CD8-positive, alpha-beta T cell (primary cell): ENCODE measurements at regions of chr12 and their contacts with region 1.

Region 1: GRCh38 chr12:101759396-101760047 is 20.3 kb upstream of the SYCP3 start:
- DNase-seq: peak in 2 of 9 experiments; percentile 44 to 57
- ATAC-seq: peak; percentile 62
- H3K4me3 ChIP-seq: no peak overlapping the region
- H3K4me3 Mint-ChIP-seq: no peak overlapping the region
- H3K27ac ChIP-seq: no peak overlapping the region
- H3K27ac Mint-ChIP-seq: no peak overlapping the region
- H3K4me1 ChIP-seq: no peaks in the 10 kb centered on the region
- H3K4me1 Mint-ChIP-seq: peaks cover 2% of the 10 kb centered on the region
- H3K27me3 ChIP-seq: no peaks in the 10 kb centered on the region
- H3K27me3 Mint-ChIP-seq: no peaks in the 10 kb centered on the region
- CTCF ChIP-seq: peak; percentile 94

Region 2: DNA sequence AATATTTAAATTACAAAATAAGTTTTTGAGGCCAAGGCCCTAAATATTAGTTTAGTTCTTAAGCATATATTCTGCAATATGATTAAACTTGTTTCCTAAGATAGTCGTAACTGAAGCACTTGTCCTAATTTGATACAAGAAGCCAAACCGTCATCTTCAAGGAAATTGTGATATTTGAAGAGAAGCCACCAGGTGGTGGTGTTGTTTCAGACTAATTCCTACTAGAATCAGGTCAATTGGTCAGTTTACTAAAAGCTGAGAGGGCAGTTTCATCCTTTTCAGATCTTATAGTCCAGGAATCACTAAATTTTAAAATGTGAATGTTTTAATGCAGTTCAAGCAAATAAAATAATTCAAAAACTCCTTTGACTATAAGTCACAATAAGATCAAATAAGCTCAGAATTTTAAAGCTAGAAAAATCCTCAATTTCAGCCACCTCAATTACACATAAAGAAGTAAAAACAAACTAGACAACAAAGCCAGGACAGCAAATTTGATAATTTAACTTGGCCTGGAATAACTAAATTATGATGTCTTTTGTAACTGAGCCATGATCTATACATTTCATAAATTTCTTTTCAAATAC is 344.9 kb before region 1 on chr12:
- CTCF ChIA-PET with region 1: interaction called, 7 read pairs
- POLR2A ChIA-PET with region 1: no interaction called
- intact Hi-C with region 1: loop called (anchors 1 to 5 kb)
- DNase-seq: peak in 2 of 9 experiments; percentile 46 to 52
- ATAC-seq: no peak
- H3K4me3 ChIP-seq: no peak overlapping the region
- H3K4me3 Mint-ChIP-seq: no peak overlapping the region
- H3K27ac ChIP-seq: no peak overlapping the region
- H3K27ac Mint-ChIP-seq: no peak overlapping the region
- H3K4me1 ChIP-seq: no peaks in the 10 kb centered on the region
- H3K4me1 Mint-ChIP-seq: no peaks in the 10 kb centered on the region
- H3K27me3 ChIP-seq: no peaks in the 10 kb centered on the region
- H3K27me3 Mint-ChIP-seq: peaks cover 5% of the 10 kb centered on the region
- CTCF ChIP-seq: peak; percentile 64

Region 3: GRCh38 chr12:101570047-101570446 is 189.5 kb before region 1 on chr12:
- CTCF ChIA-PET with region 1: interaction called, 3 read pairs
- POLR2A ChIA-PET with region 1: no interaction called
- intact Hi-C with region 1: loop called (anchors 2 to 10 kb)
- DNase-seq: peak in 2 of 9 experiments; percentile 1 to 8
- ATAC-seq: no peak
- H3K4me3 ChIP-seq: no peak overlapping the region
- H3K4me3 Mint-ChIP-seq: no peak overlapping the region
- H3K27ac ChIP-seq: no peak overlapping the region
- H3K27ac Mint-ChIP-seq: no peak overlapping the region
- H3K4me1 ChIP-seq: no peaks in the 10 kb centered on the region
- H3K4me1 Mint-ChIP-seq: no peaks in the 10 kb centered on the region
- H3K27me3 ChIP-seq: no peaks in the 10 kb centered on the region
- H3K27me3 Mint-ChIP-seq: peaks cover 11% of the 10 kb centered on the region
- CTCF ChIP-seq: no peak

Region 4: DNA sequence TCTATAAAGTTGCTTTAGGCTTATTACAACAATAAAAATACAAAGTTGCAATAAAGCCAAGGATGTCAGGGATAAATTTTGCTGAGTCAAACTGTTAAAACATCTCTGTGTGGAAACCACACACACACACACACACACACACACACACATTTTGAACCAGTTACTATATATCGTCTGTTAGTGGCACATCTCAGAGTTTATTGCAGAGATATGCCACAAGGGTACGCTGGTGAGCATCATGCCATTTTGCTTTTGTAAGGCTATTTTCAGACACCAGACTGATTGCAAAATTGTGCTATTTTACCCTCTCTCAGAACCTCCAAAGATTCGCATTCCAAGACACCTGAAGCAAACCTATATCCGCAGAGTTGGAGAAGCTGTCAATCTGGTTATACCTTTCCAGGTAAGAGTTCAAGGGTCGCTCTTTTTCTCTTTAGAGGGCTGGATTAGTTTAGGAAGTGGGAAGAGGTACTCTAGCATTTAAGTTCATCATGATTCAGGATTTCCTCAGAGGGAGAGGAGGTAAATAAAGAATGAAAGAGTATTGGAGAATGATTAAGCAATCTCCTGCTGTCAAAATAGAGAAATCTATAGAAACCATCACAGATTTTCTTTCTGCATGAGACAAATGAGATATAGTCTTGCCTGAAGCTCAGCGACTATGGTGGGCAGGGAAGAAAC is 89.4 kb before region 1 on chr12:
- CTCF ChIA-PET with region 1: interaction called, 4 read pairs
- POLR2A ChIA-PET with region 1: no interaction called
- intact Hi-C with region 1: loop called (anchors 1 to 5 kb)
- DNase-seq: peak in 6 of 9 experiments; percentile 6 to 78 (median 40)
- ATAC-seq: peak; percentile 72
- H3K4me3 ChIP-seq: no peak overlapping the region
- H3K4me3 Mint-ChIP-seq: no peak overlapping the region
- H3K27ac ChIP-seq: no peak overlapping the region
- H3K27ac Mint-ChIP-seq: peak overlapping the region; percentile 20
- H3K4me1 ChIP-seq: peaks cover 17% of the 10 kb centered on the region
- H3K4me1 Mint-ChIP-seq: peaks cover 24% of the 10 kb centered on the region
- H3K27me3 ChIP-seq: no peaks in the 10 kb centered on the region
- H3K27me3 Mint-ChIP-seq: peaks cover 2% of the 10 kb centered on the region
- CTCF ChIP-seq: peak; percentile 45

Region 5: DNA sequence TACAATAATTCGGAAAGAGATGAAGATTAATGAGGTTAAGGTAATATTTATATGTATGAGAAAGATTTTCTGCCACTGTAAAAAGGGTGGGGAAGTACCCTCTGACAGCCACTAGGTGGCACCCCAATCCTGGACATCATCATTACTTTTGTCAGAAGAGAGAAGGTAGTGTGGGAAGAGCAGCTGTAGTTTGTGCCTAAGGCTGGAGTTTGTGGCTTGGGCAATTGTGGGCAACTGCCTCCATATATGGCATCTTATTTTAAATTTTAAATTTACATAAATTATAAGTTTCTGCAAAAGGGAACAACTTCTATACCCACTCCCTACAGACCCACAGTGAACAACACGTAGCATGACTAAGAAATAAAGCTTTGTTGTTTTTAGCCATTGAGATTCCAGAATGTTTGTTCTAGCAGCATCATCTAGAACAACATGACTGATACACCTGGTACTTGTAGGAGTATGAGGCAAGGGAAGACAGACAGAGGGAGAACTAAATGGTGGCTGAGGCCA is 14.2 kb after region 1 on chr12:
- CTCF ChIA-PET with region 1: interaction called, 17 read pairs
- POLR2A ChIA-PET with region 1: interaction called, 3 read pairs
- intact Hi-C with region 1: no loop called
- DNase-seq: peak; percentile 43 to 83 (median 70)
- ATAC-seq: peak; percentile 96
- H3K4me3 ChIP-seq: no peak overlapping the region
- H3K4me3 Mint-ChIP-seq: no peak overlapping the region
- H3K27ac ChIP-seq: no peak overlapping the region
- H3K27ac Mint-ChIP-seq: no peak overlapping the region
- H3K4me1 ChIP-seq: no peaks in the 10 kb centered on the region
- H3K4me1 Mint-ChIP-seq: no peaks in the 10 kb centered on the region
- H3K27me3 ChIP-seq: no peaks in the 10 kb centered on the region
- H3K27me3 Mint-ChIP-seq: no peaks in the 10 kb centered on the region
- CTCF ChIP-seq: peak; percentile 95

Region 6: DNA sequence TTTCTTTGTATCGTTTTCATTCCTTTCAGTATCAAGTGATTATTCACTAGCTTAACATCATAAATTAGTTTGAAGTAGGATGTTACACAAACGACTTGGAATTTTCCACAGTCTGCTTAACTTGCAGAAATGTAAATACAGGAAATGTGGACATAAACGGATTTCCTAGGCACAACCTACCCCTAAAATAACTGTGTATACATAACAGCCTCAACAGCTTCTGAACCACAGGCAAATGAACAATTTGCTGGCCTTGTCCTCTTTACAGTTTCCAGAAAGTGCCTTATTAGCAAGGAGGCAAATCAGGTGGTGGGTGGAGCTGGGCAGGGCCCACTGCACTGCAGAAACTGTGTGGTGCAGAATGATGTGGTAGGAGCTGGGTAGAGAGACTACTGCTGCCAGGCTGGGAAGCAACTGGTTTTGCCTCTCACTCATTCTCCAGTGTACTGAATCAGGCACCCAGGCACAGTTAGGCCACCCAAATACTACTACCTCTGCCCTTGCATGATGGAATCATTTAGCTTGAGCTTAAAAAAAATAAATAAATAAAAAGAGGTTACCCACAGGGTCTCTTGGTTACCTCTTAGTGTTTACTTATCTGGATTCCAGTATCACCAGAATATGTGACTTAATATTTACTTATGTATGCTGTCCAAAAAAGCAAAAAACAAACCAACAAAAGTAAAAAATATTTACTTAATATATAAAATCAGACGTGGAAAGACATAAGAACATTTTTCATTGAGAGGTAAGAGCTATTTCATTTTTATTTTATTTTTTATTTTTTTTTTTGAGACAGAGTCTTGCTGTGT is 132.1 kb after region 1 on chr12:
- CTCF ChIA-PET with region 1: no interaction called
- POLR2A ChIA-PET with region 1: no interaction called
- intact Hi-C with region 1: no loop called
- DNase-seq: no peak
- ATAC-seq: no peak
- H3K4me3 ChIP-seq: no peak overlapping the region
- H3K4me3 Mint-ChIP-seq: no peak overlapping the region
- H3K27ac ChIP-seq: no peak overlapping the region
- H3K27ac Mint-ChIP-seq: no peak overlapping the region
- H3K4me1 ChIP-seq: peaks cover 5% of the 10 kb centered on the region
- H3K4me1 Mint-ChIP-seq: no peaks in the 10 kb centered on the region
- H3K27me3 ChIP-seq: no peaks in the 10 kb centered on the region
- H3K27me3 Mint-ChIP-seq: no peaks in the 10 kb centered on the region
- CTCF ChIP-seq: no peak